ENCODE measurements at regions of chr21 and their contacts with region 1.

Region 1: GRCh38 chr21:45287438-45288391 is at the start of gene POFUT2:
- DNase-seq: peak; percentile 91
- H3K4me3 ChIP-seq: peak within 1 kb of the TSS; percentile 72 to 90 (median 73)
- H3K27ac ChIP-seq: peak within 1 kb of the TSS; percentile 11
- H3K4me1 ChIP-seq: peaks cover 13% of the 10 kb centered on the region
- H3K27me3 ChIP-seq: no peaks in the 10 kb centered on the region
- CTCF ChIP-seq: no peak
- total RNA-seq, gene POFUT2: 19.3 to 25.0 TPM

Region 2: GRCh38 chr21:45140346-45140940 is 147.3 kb before region 1 on chr21:
- CTCF ChIA-PET with region 1: interaction called, 4 read pairs
- dilution Hi-C with region 1: no loop called
- in situ Hi-C with region 1: no loop called
- intact Hi-C with region 1: loop called (anchors 1 kb)
- DNase-seq: peak; percentile 70
- H3K4me3 ChIP-seq: no peak overlapping the region
- H3K27ac ChIP-seq: no peak overlapping the region
- H3K4me1 ChIP-seq: peaks cover 12% of the 10 kb centered on the region
- H3K27me3 ChIP-seq: no peaks in the 10 kb centered on the region
- CTCF ChIP-seq: peak; percentile 73 to 95

Region 3: DNA sequence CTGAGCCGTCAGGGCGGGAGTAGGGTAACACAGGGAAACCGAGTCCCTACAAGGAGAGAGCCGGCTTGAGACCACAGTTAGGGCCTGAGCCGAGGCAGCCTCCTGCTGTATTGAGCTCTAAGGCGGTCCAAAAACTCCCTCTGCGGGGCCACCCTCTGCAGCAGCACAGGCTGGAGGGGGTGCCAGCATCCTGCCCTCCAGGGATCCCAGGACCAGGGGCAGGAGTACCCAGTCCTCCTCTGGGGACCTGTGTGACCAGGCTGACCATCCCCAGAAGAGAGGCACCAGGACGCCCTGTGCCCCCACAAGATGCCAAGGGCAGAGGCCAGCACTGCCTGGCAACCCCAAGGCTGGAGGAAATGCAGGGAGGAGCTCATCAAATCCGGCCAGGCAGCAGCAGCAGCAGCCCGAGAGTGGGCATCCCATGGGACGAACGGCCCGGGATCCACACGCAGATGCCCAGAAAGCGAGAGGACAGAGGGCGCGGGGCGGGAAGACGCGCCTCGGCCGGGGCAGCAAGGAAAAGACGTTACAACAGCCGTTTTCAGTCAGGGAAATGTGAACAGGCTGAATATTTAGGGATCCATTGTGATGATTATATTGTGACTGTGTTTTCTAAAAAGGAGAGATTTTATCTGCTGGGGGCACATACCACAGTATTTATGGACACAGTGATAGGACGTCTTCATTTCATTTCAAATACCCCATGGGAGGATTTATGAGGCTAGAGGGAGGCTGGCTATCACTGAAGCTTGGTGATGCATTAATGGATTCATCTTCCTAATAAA is 60.2 kb after region 1 on chr21:
- CTCF ChIA-PET with region 1: no interaction called
- dilution Hi-C with region 1: no loop called
- in situ Hi-C with region 1: no loop called
- intact Hi-C with region 1: no loop called
- DNase-seq: no peak
- H3K4me3 ChIP-seq: no peak overlapping the region
- H3K27ac ChIP-seq: no peak overlapping the region
- H3K4me1 ChIP-seq: peaks cover 5% of the 10 kb centered on the region
- H3K27me3 ChIP-seq: peaks cover 3% of the 10 kb centered on the region
- CTCF ChIP-seq: no peak

Region 4: DNA sequence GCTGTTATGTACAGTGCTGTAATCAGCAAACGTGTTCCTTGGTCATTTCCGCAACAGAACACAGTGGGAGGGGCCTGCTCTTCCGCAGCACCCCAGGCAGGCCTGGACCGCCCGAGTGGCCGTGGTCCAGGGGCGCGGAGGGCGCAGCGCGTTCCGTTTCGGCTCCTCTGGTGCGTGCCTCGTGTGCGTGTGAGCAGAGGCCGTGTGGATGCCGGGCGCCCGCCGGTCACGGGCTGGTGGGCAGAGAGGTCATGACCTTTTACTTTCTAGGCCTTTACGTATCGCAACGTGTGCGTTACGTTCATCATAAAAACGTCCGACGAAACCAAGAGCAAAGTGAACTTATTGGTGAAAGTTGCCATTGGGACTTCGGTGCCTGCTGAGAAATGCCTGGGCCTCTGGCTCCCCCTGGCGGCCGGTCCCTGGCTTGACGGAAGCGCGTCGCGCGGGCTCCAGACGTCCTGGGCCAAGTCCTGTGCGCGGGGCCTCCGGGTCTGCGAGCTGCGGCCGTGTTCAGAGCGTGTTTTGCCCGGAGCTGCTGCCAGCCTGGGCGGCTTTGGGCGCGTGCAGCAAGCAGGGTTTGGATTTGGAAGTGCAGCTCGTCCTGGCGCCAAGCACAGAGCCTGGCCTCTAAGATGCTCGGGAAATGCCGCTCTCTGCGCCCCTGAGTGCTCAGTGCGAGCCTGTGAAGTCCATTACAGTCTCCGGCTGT is 151.6 kb after region 1 on chr21:
- CTCF ChIA-PET with region 1: no interaction called
- dilution Hi-C with region 1: no loop called
- in situ Hi-C with region 1: loop called in 1 of 2 experiments (anchors 10 kb)
- intact Hi-C with region 1: loop called (anchors 1 kb)
- DNase-seq: peak; percentile 59
- H3K4me3 ChIP-seq: peak overlapping the region in 2 of 3 experiments; percentile 20 to 30
- H3K27ac ChIP-seq: no peak overlapping the region
- H3K4me1 ChIP-seq: peaks cover 7% of the 10 kb centered on the region
- H3K27me3 ChIP-seq: no peaks in the 10 kb centered on the region
- CTCF ChIP-seq: peak; percentile 79 to 96

Region 5: GRCh38 chr21:45460611-45461368 is 173.1 kb after region 1 on chr21:
- CTCF ChIA-PET with region 1: no interaction called
- dilution Hi-C with region 1: no loop called
- in situ Hi-C with region 1: loop called in 1 of 2 experiments (anchors 10 kb)
- intact Hi-C with region 1: no loop called
- DNase-seq: peak; percentile 31
- H3K4me3 ChIP-seq: no peak overlapping the region
- H3K27ac ChIP-seq: no peak overlapping the region
- H3K4me1 ChIP-seq: peaks cover 2% of the 10 kb centered on the region
- H3K27me3 ChIP-seq: no peaks in the 10 kb centered on the region
- CTCF ChIP-seq: no peak

Region 6: GRCh38 chr21:45820171-45821091 is 532.7 kb after region 1 on chr21:
- CTCF ChIA-PET with region 1: no interaction called
- dilution Hi-C with region 1: no loop called
- in situ Hi-C with region 1: no loop called
- intact Hi-C with region 1: loop called (anchors 1 kb)
- DNase-seq: peak; percentile 63
- H3K4me3 ChIP-seq: no peak overlapping the region
- H3K27ac ChIP-seq: no peak overlapping the region
- H3K4me1 ChIP-seq: peaks cover 19% of the 10 kb centered on the region
- H3K27me3 ChIP-seq: no peaks in the 10 kb centered on the region
- CTCF ChIP-seq: peak; percentile 77 to 90

Measured in mammary epithelial cell (primary cell).